Naive thymus-derived CD4-positive, alpha-beta T cell (primary cell): ENCODE measurements at regions of chr12 and their contacts with region 1.

Region 1: GRCh38 chr12:51424662-51425438 is at the start of gene SLC4A8:
- DNase-seq: peak; percentile 22 to 83 (median 51)
- ATAC-seq: peak; percentile 91
- H3K4me3 ChIP-seq: peak within 1 kb of the TSS; percentile 56
- H3K4me3 Mint-ChIP-seq: peak within 1 kb of the TSS; percentile 75 to 90 (median 82)
- H3K27ac ChIP-seq: no peak within 1 kb of the TSS
- H3K27ac Mint-ChIP-seq: peak within 1 kb of the TSS in 8 of 9 donors; percentile 2 to 90 (median 48)
- H3K4me1 ChIP-seq: peaks cover 5% of the 10 kb centered on the region in 2 donors
- H3K4me1 Mint-ChIP-seq: peaks cover 12 to 33% (median 13%) of the 10 kb centered on the region in 7 donors
- H3K27me3 ChIP-seq: no peaks in the 10 kb centered on the region
- H3K27me3 Mint-ChIP-seq: peaks cover 0 to 13% (median 0%) of the 10 kb centered on the region in 5 donors
- total RNA-seq, gene SLC4A8: 0.97 to 8.4 (median 3.4) TPM

Region 2: GRCh38 chr12:51391283-51392162 is 33.3 kb before region 1 on chr12 and contains the start of gene GALNT6:
- CTCF ChIA-PET with region 1: interaction called, 6 read pairs
- POLR2A ChIA-PET with region 1: interaction called, 3 read pairs
- intact Hi-C with region 1: loop called in 1 of 2 experiments (anchors 2 kb)
- DNase-seq: peak; percentile 50 to 74 (median 61)
- ATAC-seq: peak; percentile 76
- H3K4me3 ChIP-seq: peak within 1 kb of the TSS; percentile 67
- H3K4me3 Mint-ChIP-seq: peak within 1 kb of the TSS; percentile 77 to 96 (median 92)
- H3K27ac ChIP-seq: peak within 1 kb of the TSS; percentile 83
- H3K27ac Mint-ChIP-seq: peak within 1 kb of the TSS; percentile 84 to 96 (median 90)
- H3K4me1 ChIP-seq: peaks cover 50 to 68% of the 10 kb centered on the region in 2 donors
- H3K4me1 Mint-ChIP-seq: peaks cover 67 to 87% (median 74%) of the 10 kb centered on the region in 7 donors
- H3K27me3 ChIP-seq: no peaks in the 10 kb centered on the region
- H3K27me3 Mint-ChIP-seq: peaks cover 0 to 8% (median 0%) of the 10 kb centered on the region in 5 donors
- total RNA-seq, gene GALNT6: 2.5 to 19.5 (median 13.4) TPM

Region 3: DNA sequence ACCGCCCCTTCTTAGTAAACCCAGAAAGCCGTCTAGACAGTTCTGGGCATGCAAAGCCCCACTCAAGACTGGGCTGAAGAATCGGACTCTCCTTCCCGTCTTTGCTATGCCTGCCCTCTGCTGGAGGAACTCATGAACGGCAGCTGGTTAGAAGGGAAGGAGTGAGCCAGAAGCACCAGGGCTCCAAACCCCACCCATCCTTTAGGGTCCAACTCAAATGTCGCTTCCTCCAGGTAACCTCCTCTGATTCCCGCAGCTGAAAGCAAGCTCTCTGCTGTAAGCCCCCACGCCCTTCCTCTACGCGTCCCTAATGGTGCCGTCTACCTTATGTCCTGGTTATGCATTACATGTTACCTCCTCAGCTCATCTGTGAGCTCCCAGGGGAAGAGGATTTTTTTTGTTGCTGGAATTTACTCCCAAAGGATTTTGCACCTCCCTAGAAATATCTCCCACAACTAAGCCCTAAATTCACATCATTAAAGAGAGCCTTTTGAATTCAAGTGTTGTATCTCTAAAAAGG is 107.2 kb after region 1 on chr12:
- CTCF ChIA-PET with region 1: interaction called, 67 read pairs
- POLR2A ChIA-PET with region 1: no interaction called
- intact Hi-C with region 1: loop called (anchors 1 kb)
- DNase-seq: peak; percentile 44 to 78 (median 68)
- ATAC-seq: peak; percentile 94
- H3K4me3 ChIP-seq: no peak overlapping the region
- H3K4me3 Mint-ChIP-seq: no peak overlapping the region
- H3K27ac ChIP-seq: no peak overlapping the region
- H3K27ac Mint-ChIP-seq: peak overlapping the region in 5 of 9 donors; percentile 11 to 52 (median 32)
- H3K4me1 ChIP-seq: peaks cover 0 to 4% of the 10 kb centered on the region in 2 donors
- H3K4me1 Mint-ChIP-seq: peaks cover 0 to 11% (median 6%) of the 10 kb centered on the region in 7 donors
- H3K27me3 ChIP-seq: no peaks in the 10 kb centered on the region
- H3K27me3 Mint-ChIP-seq: peaks cover 0 to 32% (median 4%) of the 10 kb centered on the region in 5 donors

Region 4: GRCh38 chr12:51678086-51678724 is 253.4 kb after region 1 on chr12:
- CTCF ChIA-PET with region 1: no interaction called
- POLR2A ChIA-PET with region 1: no interaction called
- intact Hi-C with region 1: loop called (anchors 1 kb)
- DNase-seq: peak in 5 of 9 donors; percentile 13 to 28 (median 20)
- ATAC-seq: peak; percentile 72
- H3K4me3 ChIP-seq: no peak overlapping the region
- H3K4me3 Mint-ChIP-seq: no peak overlapping the region
- H3K27ac ChIP-seq: no peak overlapping the region
- H3K27ac Mint-ChIP-seq: no peak overlapping the region
- H3K4me1 ChIP-seq: no peaks in the 10 kb centered on the region
- H3K4me1 Mint-ChIP-seq: peaks cover 0 to 6% (median 0%) of the 10 kb centered on the region in 7 donors
- H3K27me3 ChIP-seq: peaks cover 0 to 3% of the 10 kb centered on the region in 2 donors
- H3K27me3 Mint-ChIP-seq: peaks cover 0 to 38% (median 4%) of the 10 kb centered on the region in 5 donors

Region 5: DNA sequence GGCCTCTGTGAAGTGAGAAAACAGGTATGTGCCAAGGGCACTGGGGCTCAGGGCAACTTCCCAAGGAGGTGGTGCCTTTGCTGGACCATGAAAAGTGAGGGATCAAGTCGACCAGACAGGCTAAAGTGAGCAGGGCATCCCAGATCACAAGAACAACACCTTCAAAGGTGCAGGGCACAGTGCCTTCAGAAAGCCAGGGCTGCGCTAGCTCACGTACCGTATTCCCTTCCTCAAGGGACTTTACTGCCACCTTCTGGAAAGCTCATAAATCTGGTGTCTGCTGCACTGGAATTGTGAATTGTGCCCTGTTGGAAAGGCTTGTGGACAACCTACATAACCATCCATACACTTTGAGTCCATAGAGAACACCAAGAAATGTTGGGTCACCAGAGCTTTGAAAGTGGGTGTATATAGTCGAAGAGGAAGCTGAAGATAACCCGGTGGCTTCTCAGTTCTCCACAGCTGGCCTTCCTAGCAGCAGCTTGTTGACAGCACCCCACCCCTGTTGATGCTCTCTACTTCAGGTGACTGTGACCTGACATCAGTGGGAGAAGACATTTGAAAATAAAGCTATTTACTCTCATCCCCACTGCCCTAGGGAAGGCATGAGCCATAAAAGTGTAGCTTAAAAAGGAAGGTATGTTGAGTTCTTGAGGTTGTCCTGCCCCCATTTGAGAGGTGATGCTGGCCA is 399.2 kb after region 1 on chr12:
- CTCF ChIA-PET with region 1: interaction called, 3 read pairs
- POLR2A ChIA-PET with region 1: no interaction called
- intact Hi-C with region 1: loop called in 1 of 2 experiments (anchors 2 kb)
- DNase-seq: peak in 5 of 9 donors; percentile 27 to 47 (median 36)
- ATAC-seq: no peak
- H3K4me3 ChIP-seq: no peak overlapping the region
- H3K4me3 Mint-ChIP-seq: peak overlapping the region in 3 of 10 donors; percentile 4 to 17 (median 6)
- H3K27ac ChIP-seq: no peak overlapping the region
- H3K27ac Mint-ChIP-seq: peak overlapping the region in 8 of 9 donors; percentile 16 to 68 (median 54)
- H3K4me1 ChIP-seq: peaks cover 5 to 24% of the 10 kb centered on the region in 2 donors
- H3K4me1 Mint-ChIP-seq: peaks cover 29 to 41% (median 32%) of the 10 kb centered on the region in 7 donors
- H3K27me3 ChIP-seq: no peaks in the 10 kb centered on the region
- H3K27me3 Mint-ChIP-seq: peaks cover 0 to 14% (median 0%) of the 10 kb centered on the region in 5 donors

Region 6: GRCh38 chr12:51970904-51971646 is 546.2 kb after region 1 on chr12:
- CTCF ChIA-PET with region 1: no interaction called
- POLR2A ChIA-PET with region 1: no interaction called
- intact Hi-C with region 1: loop called in 1 of 2 experiments (anchors 10 kb)
- DNase-seq: peak in 2 of 9 donors; percentile 26 to 43
- ATAC-seq: peak; percentile 53
- H3K4me3 ChIP-seq: peak overlapping the region; percentile 1
- H3K4me3 Mint-ChIP-seq: peak overlapping the region; percentile 41 to 85 (median 72)
- H3K27ac ChIP-seq: no peak overlapping the region
- H3K27ac Mint-ChIP-seq: peak overlapping the region; percentile 43 to 87 (median 68)
- H3K4me1 ChIP-seq: peaks cover 56 to 64% of the 10 kb centered on the region in 2 donors
- H3K4me1 Mint-ChIP-seq: peaks cover 60 to 76% (median 69%) of the 10 kb centered on the region in 7 donors
- H3K27me3 ChIP-seq: no peaks in the 10 kb centered on the region
- H3K27me3 Mint-ChIP-seq: peaks cover 0 to 26% (median 0%) of the 10 kb centered on the region in 5 donors